Sigmoid colon (tissue), 7 donors: ENCODE measurements at regions of chr4 and their contacts with region 1.

Region 1: GRCh38 chr4:74376888-74377483 is 12.0 kb downstream of the EREG start:
- DNase-seq: no peak
- H3K4me3 ChIP-seq: no peak overlapping the region
- H3K27ac ChIP-seq: no peak overlapping the region
- H3K4me1 ChIP-seq: peaks cover 0 to 4% (median 0%) of the 10 kb centered on the region in 4 donors
- H3K27me3 ChIP-seq: no peaks in the 10 kb centered on the region
- CTCF ChIP-seq: peak in 3 of 4 experiments; percentile 44 to 55 (median 53)
- EP300 ChIP-seq: no peak
- POLR2A ChIP-seq: no peak

Region 2: DNA sequence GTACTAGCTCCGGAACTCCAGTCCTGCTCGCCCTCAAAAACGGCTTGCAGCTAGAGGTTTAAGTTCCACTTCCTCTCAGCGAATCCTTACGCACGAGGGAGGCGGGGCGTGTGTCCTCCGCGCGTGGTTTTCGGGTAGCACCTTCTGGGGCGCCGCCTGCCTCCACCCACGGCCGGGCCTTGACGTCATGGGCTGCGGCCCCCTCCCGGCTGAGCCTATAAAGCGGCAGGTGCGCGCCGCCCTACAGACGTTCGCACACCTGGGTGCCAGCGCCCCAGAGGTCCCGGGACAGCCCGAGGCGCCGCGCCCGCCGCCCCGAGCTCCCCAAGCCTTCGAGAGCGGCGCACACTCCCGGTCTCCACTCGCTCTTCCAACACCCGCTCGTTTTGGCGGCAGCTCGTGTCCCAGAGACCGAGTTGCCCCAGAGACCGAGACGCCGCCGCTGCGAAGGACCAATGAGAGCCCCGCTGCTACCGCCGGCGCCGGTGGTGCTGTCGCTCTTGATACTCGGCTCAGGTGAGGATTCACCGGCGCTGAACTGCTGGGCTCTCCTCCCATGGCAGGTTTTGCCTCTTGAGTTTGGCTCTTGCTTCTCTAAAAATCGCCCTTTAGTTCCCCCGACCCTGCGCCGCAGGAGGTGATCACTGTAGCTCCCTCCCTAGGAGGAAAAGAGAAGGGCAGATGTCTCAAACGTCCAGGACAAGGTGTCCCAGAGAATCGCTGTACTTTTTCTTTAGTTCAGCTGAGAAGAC is 68.1 kb after region 1 on chr4 and contains the start of gene AREG:
- intact Hi-C with region 1: loop called (anchors 5 kb)
- DNase-seq: peak; percentile 84
- H3K4me3 ChIP-seq: peak within 1 kb of the TSS; percentile 34 to 74 (median 58)
- H3K27ac ChIP-seq: peak within 1 kb of the TSS; percentile 65 to 87 (median 77)
- H3K4me1 ChIP-seq: peaks cover 0 to 16% (median 4%) of the 10 kb centered on the region in 4 donors
- H3K27me3 ChIP-seq: no peaks in the 10 kb centered on the region
- CTCF ChIP-seq: peak in 3 of 4 experiments; percentile 27 to 50 (median 34)
- EP300 ChIP-seq: peak in 2 of 4 donors; percentile 29 to 52
- POLR2A ChIP-seq: peak in 1 of 2 donors; percentile 70
- total RNA-seq, gene AREG: 1.1 to 12.5 (median 10.7) TPM

Region 3: DNA sequence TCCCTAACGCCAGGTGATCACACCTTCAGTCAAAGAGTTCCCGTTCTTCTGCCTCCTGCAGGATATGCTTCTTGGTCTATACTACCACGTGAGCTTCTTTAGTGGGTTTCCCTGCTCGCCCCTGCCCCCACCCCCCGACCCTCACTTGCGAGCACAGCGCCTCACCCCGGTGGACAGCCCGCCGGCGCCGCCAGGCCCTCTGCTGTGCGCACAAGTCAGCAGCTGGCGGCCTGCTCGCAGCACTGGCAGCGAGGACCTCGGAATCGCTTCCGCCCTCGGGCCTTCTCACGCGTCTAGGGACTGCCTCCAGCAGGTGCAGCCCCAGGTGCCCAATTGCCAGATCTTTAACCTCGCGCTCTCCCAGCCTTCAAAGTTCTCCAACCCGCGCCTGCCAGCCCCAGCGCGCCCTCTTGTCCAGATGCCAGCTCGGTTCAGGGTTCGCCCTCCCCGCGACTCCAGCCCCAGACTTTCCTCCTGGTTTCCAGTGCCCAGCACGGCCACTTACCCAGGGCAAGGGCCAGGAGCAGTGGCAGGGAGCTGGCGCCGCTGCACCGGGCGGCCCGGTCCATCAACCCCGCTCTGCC is 416.9 kb after region 1 on chr4:
- intact Hi-C with region 1: loop called (anchors 2 kb)
- DNase-seq: peak; percentile 81
- H3K4me3 ChIP-seq: peak overlapping the region; percentile 65 to 74 (median 68)
- H3K27ac ChIP-seq: peak overlapping the region; percentile 89 to 95 (median 92)
- H3K4me1 ChIP-seq: peaks cover 0 to 33% (median 26%) of the 10 kb centered on the region in 4 donors
- H3K27me3 ChIP-seq: no peaks in the 10 kb centered on the region
- CTCF ChIP-seq: peak; percentile 9 to 55 (median 42)
- EP300 ChIP-seq: no peak
- POLR2A ChIP-seq: no peak